Right ventricle myocardium superior (tissue), 1 donor: ENCODE measurements at regions of chr9 and their contacts with region 1.

Region 1: GRCh38 chr9:4315582-4316215 is 15.8 kb upstream of the GLIS3 start:
- DNase-seq: peak; percentile 87
- ATAC-seq: peak; percentile 98

Region 2: GRCh38 chr9:4339357-4339756 is 23.7 kb after region 1 on chr9:
- intact Hi-C with region 1: loop called (anchors 1 kb)
- DNase-seq: peak; percentile 89
- ATAC-seq: peak; percentile 75

Region 3: GRCh38 chr9:4366591-4367330 is 51.1 kb after region 1 on chr9:
- intact Hi-C with region 1: loop called (anchors 5 kb)
- DNase-seq: no peak
- ATAC-seq: peak; percentile 27